Activated CD4-positive, alpha-beta T cell treated with anti-CD3 and anti-CD28 coated beads for 36 hours (primary cell): ENCODE measurements at regions of chr1 and their contacts with region 1.

Region 1: DNA sequence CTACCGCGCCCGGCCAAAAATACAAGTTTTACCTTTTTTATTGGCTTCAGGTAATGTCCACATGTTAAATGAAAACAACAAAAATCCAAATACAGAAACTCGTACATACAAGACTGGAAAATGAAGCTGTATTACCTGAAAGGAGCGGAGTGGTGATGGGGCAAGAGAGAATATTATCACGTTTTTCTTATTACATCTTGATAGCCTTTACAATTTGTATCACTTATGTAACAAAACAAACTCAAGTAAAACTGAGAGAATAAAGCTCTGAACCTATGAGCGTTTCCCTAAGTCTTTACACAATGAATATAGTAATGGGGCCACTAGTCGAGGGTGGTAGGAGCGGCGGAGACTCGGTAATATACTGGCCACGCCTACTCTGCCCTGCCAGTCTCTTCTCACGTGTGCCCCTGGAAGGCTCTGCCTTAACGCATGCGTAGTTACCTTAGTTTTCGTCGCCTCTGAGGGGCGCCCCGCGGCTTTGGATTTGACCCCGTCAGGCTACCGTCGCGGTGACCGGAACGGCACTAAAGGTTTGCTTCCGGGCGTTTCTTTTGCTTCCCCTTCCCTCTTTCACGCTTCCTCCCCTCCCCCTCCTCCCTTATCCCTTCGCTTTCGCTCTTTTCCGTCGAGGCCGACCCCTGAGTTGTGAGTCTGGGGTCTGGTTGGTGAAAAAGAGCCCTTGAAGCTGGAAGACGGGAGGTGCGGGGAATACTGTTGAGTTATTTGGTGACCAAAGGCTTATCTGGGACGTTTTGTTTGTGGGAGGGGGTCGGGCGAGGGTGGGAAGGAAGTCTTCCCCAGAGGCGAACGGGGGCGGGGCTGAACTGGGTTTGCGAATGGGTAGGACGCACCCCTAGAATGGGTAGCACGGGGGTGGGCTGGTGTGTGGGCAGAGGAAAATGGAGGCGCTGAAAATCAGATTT is at the start of gene SETDB1:
- DNase-seq: peak; percentile 97
- ATAC-seq: peak; percentile 89
- H3K4me3 Mint-ChIP-seq: peak within 1 kb of the TSS; percentile 89
- H3K27ac Mint-ChIP-seq: peak within 1 kb of the TSS; percentile 96
- H3K4me1 Mint-ChIP-seq: peaks cover 29% of the 10 kb centered on the region
- H3K27me3 Mint-ChIP-seq: no peaks in the 10 kb centered on the region
- total RNA-seq, gene SETDB1: 48.8 to 52.7 TPM

Region 2: DNA sequence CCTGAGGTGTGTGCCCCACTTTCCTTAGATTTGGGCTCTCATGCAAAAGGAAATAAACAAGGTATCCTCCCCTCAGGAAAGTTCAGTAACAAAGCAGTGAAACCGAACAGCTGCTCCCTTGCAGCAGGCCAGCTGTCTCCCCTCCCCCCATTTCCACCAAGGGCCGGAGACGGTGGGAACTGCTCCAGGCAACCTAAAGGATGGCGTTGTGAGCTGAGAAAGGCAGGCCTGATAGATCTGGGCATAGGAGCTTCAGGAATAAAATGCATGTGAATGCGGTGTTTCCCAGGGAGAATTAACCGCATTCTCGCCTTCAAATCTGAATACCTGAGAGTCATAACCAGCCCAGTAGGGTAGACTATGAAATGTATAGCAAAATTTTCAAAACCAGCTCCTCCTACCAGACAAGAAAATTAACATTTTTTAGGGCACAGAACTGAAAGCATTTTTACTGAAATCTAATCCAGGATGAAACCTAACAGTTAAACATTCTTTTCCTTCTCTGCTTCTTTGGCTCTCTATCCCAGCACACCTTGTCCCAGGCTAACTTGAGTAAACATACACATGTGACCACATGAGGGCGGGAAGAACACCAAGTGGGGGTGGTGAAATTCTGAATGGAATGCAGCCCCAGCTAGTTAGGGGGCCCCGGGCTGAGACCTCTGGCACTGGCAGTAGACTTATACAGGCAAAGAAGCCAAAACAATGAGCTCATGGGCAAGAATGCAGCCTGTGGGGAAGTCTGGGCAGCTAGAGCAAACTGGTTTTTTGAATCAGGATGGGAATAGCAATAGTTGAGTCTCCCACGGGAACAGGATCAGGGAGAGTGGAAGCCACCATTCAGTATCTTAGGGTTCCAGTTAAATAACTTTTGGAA is 358.1 kb before region 1 on chr1:
- CTCF ChIA-PET with region 1: interaction called, 3 read pairs
- POLR2A ChIA-PET with region 1: interaction called, 9 read pairs
- intact Hi-C with region 1: loop called in 1 of 2 experiments (anchors 2 kb)
- DNase-seq: peak; percentile 76
- ATAC-seq: peak; percentile 24
- H3K4me3 Mint-ChIP-seq: peak overlapping the region; percentile 73
- H3K27ac Mint-ChIP-seq: peak overlapping the region; percentile 99
- H3K4me1 Mint-ChIP-seq: peaks cover 95% of the 10 kb centered on the region
- H3K27me3 Mint-ChIP-seq: no peaks in the 10 kb centered on the region

Region 3: GRCh38 chr1:150696590-150697524 is 229.2 kb before region 1 on chr1 and contains the start of gene GOLPH3L:
- CTCF ChIA-PET with region 1: interaction called, 14 read pairs
- POLR2A ChIA-PET with region 1: no interaction called
- intact Hi-C with region 1: loop called in 1 of 2 experiments (anchors 1 kb)
- DNase-seq: peak; percentile 93
- ATAC-seq: peak; percentile 100
- H3K4me3 Mint-ChIP-seq: peak within 1 kb of the TSS; percentile 98
- H3K27ac Mint-ChIP-seq: peak within 1 kb of the TSS; percentile 92
- H3K4me1 Mint-ChIP-seq: peaks cover 21% of the 10 kb centered on the region
- H3K27me3 Mint-ChIP-seq: peaks cover 3% of the 10 kb centered on the region
- total RNA-seq, gene GOLPH3L: 24.2 to 29.1 TPM

Region 4: GRCh38 chr1:150863724-150864123 is 62.4 kb before region 1 on chr1:
- CTCF ChIA-PET with region 1: interaction called, 11 read pairs
- POLR2A ChIA-PET with region 1: no interaction called
- intact Hi-C with region 1: no loop called
- DNase-seq: no peak
- ATAC-seq: peak; percentile 61
- H3K4me3 Mint-ChIP-seq: no peak overlapping the region
- H3K27ac Mint-ChIP-seq: no peak overlapping the region
- H3K4me1 Mint-ChIP-seq: peaks cover 24% of the 10 kb centered on the region
- H3K27me3 Mint-ChIP-seq: no peaks in the 10 kb centered on the region

Region 5: DNA sequence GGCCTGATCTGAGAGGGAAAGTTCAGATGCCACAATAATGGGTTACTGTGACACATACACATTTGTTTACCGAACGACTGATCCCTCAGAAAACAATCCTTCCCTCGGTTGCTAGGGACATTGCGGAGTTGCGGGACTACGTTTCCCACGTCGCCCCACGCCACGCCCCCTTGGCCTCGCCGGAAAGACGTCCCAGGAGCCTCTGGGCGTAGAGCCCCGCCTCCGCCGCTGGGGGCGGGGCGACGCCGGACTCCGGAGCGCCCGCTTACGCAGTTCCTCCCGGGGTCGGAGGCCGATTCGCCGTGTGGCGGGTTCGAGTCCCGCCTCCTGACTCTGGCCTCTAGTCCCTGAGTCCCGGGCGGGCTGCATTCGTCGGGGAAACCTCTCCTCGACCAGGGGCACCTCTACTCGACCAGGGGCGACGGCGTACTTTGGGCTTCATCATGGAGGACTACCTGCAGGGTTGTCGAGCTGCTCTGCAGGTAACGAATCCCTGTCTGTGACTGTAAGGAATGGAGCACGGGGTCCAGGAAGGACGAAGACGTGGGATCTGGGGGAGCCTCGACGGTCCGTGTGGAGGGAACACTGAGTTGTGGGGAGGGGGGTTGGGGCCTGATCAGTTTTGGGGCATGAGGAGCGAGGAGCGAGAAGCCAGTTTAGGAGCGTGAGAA is 82.2 kb after region 1 on chr1 and contains the start of gene PRUNE1:
- CTCF ChIA-PET with region 1: interaction called, 3 read pairs
- POLR2A ChIA-PET with region 1: no interaction called
- intact Hi-C with region 1: loop called in 1 of 2 experiments (anchors 1 kb)
- DNase-seq: peak; percentile 99
- ATAC-seq: peak; percentile 84
- H3K4me3 Mint-ChIP-seq: peak within 1 kb of the TSS; percentile 90
- H3K27ac Mint-ChIP-seq: peak within 1 kb of the TSS; percentile 96
- H3K4me1 Mint-ChIP-seq: peaks cover 63% of the 10 kb centered on the region
- H3K27me3 Mint-ChIP-seq: no peaks in the 10 kb centered on the region
- total RNA-seq, gene PRUNE1: 13.6 to 18.6 TPM

Region 6: GRCh38 chr1:151104630-151105029 is 178.6 kb after region 1 on chr1:
- CTCF ChIA-PET with region 1: no interaction called
- POLR2A ChIA-PET with region 1: no interaction called
- intact Hi-C with region 1: no loop called
- DNase-seq: no peak
- ATAC-seq: no peak
- H3K4me3 Mint-ChIP-seq: no peak overlapping the region
- H3K27ac Mint-ChIP-seq: no peak overlapping the region
- H3K4me1 Mint-ChIP-seq: no peaks in the 10 kb centered on the region
- H3K27me3 Mint-ChIP-seq: no peaks in the 10 kb centered on the region

Region 7: GRCh38 chr1:151254217-151255213 is 328.4 kb after region 1 on chr1 and contains the start of gene PSMD4:
- CTCF ChIA-PET with region 1: no interaction called
- POLR2A ChIA-PET with region 1: no interaction called
- intact Hi-C with region 1: loop called in 1 of 2 experiments (anchors 1 kb)
- DNase-seq: peak; percentile 96
- ATAC-seq: peak; percentile 95
- H3K4me3 Mint-ChIP-seq: peak within 1 kb of the TSS; percentile 96
- H3K27ac Mint-ChIP-seq: peak within 1 kb of the TSS; percentile 96
- H3K4me1 Mint-ChIP-seq: peaks cover 27% of the 10 kb centered on the region
- H3K27me3 Mint-ChIP-seq: no peaks in the 10 kb centered on the region
- total RNA-seq, gene PSMD4: 187 to 243 TPM